Activated CD8-positive, alpha-beta T cell treated with anti-CD3 and anti-CD28 coated beads for 36 hours (primary cell): ENCODE measurements at regions of chr10 and their contacts with region 1.

Region 1: GRCh38 chr10:6348096-6348874 is 145.6 kb downstream of the PFKFB3 start:
- DNase-seq: peak; percentile 93
- ATAC-seq: peak; percentile 90
- H3K4me3 Mint-ChIP-seq: peak overlapping the region; percentile 66
- H3K27ac Mint-ChIP-seq: peak overlapping the region; percentile 99
- H3K4me1 Mint-ChIP-seq: peaks cover 56% of the 10 kb centered on the region
- H3K27me3 Mint-ChIP-seq: no peaks in the 10 kb centered on the region
- CTCF ChIP-seq: no peak

Region 2: DNA sequence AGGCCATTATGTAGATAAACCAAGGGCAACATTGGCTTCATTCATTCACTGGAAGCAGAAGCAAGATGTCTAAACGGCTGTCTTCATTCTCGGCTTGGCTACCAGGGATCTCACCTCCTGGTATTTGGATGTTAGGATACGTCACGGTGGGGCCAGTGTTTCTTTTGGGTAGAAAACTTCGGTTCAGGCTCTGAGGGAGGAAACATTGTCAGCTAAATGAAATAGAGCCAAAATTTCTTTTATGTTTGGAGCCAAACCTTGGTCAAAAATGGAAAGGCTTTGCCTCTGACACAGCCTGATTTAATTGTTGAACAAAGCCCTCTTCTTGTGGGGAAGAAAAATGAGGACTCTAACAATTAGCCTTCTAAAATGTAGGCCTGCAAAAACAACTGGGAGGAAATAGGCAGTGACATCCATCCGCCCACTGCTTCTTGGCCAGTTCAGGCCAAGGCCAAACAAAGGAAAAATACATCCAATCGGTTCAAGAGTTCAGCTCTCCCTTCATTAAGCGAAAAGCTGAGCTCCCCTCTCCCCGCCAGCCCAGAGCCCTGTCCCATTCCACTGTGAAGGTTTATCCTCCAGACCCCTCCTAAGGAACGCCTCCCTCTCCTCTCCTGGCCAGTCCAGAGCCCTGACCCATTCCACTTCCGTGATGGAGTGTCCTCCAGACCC is 101.1 kb before region 1 on chr10:
- CTCF ChIA-PET with region 1: no interaction called
- POLR2A ChIA-PET with region 1: no interaction called
- intact Hi-C with region 1: no loop called
- DNase-seq: no peak
- ATAC-seq: no peak
- H3K4me3 Mint-ChIP-seq: no peak overlapping the region
- H3K27ac Mint-ChIP-seq: no peak overlapping the region
- H3K4me1 Mint-ChIP-seq: no peaks in the 10 kb centered on the region
- H3K27me3 Mint-ChIP-seq: no peaks in the 10 kb centered on the region
- CTCF ChIP-seq: no peak

Region 3: DNA sequence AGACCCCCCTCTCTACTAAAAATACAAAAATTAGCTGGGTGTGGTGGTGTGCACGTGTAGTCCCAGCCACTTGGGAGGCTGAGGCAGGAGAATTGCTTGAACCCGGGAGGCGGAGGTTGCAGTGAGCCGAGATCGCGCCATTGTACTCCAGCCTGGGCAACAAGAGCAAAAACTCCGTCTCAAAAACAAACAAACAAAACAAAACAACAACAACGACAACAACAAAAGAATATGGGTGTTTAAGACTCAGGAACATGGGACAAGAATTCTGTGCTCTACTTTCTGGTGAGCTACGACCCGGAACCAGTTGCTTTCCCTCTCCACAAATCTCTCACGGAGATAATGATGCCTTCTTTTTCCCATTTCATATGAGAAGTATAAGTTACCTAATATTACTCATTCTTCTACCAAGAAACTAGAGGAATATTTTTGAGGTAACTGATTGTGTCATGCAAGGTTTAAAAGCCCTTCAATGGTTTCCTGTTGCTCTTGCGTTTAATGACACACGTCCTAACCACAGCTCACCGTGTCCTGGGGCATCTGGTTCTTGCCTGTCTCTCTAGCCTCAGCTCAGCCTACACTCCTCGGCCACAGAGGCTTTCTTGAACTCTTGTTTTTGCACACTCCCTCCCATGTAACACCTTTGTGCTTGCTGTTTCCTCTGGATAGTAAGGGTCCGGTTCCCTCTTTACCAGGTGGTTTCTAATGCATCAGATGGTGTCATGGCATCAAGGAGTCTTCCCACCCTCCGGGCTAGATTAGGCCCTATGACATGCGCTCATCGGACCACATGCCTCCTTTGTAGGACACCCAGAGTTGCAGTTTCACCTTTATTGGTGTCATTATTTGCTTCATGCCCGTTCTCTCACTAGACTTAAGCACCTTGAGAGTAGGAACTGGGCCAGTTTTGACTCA is 78.1 kb before region 1 on chr10:
- CTCF ChIA-PET with region 1: interaction called, 12 read pairs
- POLR2A ChIA-PET with region 1: interaction called, 22 read pairs
- intact Hi-C with region 1: loop called (anchors 1 kb)
- DNase-seq: peak; percentile 95
- ATAC-seq: peak; percentile 79
- H3K4me3 Mint-ChIP-seq: peak overlapping the region; percentile 50
- H3K27ac Mint-ChIP-seq: peak overlapping the region; percentile 97
- H3K4me1 Mint-ChIP-seq: peaks cover 55% of the 10 kb centered on the region
- H3K27me3 Mint-ChIP-seq: no peaks in the 10 kb centered on the region
- CTCF ChIP-seq: no peak

Region 4: DNA sequence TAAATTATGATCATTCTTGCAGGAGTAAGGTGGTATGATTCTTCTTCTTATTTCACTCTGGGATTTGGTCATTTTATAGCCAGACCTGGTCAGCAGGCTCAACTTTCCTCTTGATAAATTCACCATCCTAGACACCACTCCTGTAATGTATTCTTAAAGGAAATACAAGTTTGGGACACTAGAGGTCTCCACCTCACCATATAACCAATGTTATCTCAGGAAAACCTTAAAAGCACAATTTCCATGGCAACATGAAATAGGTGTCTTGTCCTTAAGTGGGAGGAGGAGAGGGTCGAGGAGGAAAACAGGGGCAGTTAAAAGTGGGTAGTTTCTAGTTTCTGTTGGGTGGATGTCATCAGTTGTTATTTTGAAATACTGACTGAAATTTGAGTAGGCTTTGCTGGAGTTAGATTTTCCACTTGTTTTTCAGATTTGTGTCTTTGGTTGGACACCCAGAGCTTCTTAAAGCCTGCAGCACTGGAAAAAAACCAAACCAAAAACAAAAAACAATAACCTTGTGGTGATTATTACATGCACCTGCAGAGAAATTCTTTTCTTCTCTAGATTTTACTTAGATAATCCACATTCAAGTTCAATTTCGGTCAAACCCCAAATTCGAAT is 68.7 kb after region 1 on chr10:
- CTCF ChIA-PET with region 1: no interaction called
- POLR2A ChIA-PET with region 1: no interaction called
- intact Hi-C with region 1: no loop called
- DNase-seq: no peak
- ATAC-seq: peak; percentile 82
- H3K4me3 Mint-ChIP-seq: no peak overlapping the region
- H3K27ac Mint-ChIP-seq: no peak overlapping the region
- H3K4me1 Mint-ChIP-seq: peaks cover 1% of the 10 kb centered on the region
- H3K27me3 Mint-ChIP-seq: no peaks in the 10 kb centered on the region
- CTCF ChIP-seq: peak; percentile 83